AG04450 (cell line): ENCODE measurements at regions of chr1 and their contacts with region 1.

Region 1: DNA sequence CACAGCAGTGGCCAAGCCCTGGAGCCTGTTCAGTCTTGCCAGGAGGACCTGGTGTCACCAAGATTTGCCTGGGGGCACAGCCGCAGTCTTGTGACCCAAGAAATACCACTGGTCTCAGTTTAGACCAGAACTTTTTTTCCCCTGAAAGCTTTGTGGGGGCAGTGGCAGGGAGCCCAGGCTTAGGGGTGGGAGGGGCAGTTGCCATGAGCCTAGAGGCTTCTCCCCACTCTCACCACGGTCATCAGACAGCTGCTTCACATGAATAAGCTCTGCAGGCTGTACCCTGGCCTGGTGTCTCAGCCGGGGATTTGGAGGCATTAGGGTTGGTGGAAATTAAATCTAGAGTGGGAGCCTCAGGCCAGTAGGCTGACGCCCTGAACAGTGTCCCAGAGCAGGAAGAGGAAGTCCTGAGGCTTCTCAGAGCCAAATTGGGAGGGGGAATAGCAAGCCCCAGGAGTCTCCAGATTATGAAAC is 73.7 kb downstream of the SLC16A1 start:
- DNase-seq: no peak
- H3K4me3 ChIP-seq: no peak overlapping the region
- H3K27ac ChIP-seq: no peak overlapping the region
- H3K27me3 ChIP-seq: no peaks in the 10 kb centered on the region
- CTCF ChIP-seq: no peak

Region 2: GRCh38 chr1:112866151-112866550 is 16.2 kb before region 1 on chr1:
- CTCF ChIA-PET with region 1: interaction called, 4 read pairs
- POLR2A ChIA-PET with region 1: interaction called, 11 read pairs
- DNase-seq: peak; percentile 32
- H3K4me3 ChIP-seq: no peak overlapping the region
- H3K27ac ChIP-seq: no peak overlapping the region
- H3K27me3 ChIP-seq: no peaks in the 10 kb centered on the region
- CTCF ChIP-seq: no peak

Region 3: DNA sequence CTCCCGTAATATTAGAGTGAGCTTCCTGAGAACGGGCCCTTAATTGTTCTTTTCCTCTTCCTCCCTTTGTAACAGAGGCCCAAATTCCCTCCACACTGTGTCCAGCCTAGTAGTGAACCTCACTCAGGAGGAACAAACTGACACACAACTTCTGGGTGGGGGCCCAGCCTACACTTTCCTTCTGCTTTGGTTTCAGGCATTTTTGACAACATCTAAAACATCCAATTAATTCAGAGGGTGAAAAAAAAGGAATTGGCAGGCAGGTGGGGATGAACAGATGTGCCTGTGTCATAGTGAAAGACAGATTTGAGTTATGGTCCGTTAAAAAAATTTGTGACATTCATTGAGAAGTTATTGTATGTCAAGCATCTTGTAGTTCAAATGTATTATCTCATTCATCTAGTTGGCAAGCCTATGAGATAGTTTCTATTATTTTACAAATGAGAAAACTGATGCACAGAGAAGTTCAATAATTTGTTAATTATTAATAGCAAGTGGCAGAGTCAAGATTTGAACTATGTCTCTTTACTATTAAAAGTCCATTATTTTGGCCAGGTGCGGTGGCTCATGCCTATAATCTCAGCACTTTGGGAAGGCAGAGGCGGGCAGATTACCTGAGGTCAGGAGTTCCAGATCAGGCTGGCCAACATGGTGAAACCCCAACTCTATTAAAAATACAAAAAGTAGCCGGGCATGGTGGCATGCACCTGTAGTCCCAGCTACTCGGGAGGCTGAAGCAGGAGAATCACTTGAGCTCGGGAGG is 149.0 kb after region 1 on chr1:
- CTCF ChIA-PET with region 1: interaction called, 11 read pairs
- POLR2A ChIA-PET with region 1: no interaction called
- DNase-seq: no peak
- H3K4me3 ChIP-seq: no peak overlapping the region
- H3K27ac ChIP-seq: no peak overlapping the region
- H3K27me3 ChIP-seq: no peaks in the 10 kb centered on the region
- CTCF ChIP-seq: no peak